ENCODE measurements at regions of chr7 and their contacts with region 1.

Region 1: GRCh38 chr7:151719031-151719430 is 157.9 kb downstream of the PRKAG2 start:
- DNase-seq: no peak
- H3K4me3 ChIP-seq: no peak overlapping the region
- H3K27me3 ChIP-seq: no peaks in the 10 kb centered on the region
- CTCF ChIP-seq: no peak

Region 2: GRCh38 chr7:151226875-151227782 is 491.9 kb before region 1 on chr7 and contains the start of gene ABCF2:
- CTCF ChIA-PET with region 1: no interaction called
- POLR2A ChIA-PET with region 1: interaction called, 13 read pairs
- DNase-seq: peak; percentile 95
- H3K4me3 ChIP-seq: peak within 1 kb of the TSS; percentile 96
- H3K27me3 ChIP-seq: no peaks in the 10 kb centered on the region
- CTCF ChIP-seq: 0 out of 2 replicates have a peak, but pooled peaks have one; percentile 11
- polyA plus RNA-seq, gene ABCF2: 44.2 and 62.5 TPM in 2 replicates

Measured in BJ (cell line).